Thyroid gland (tissue), 4 donors: ENCODE measurements at regions of chr6 and their contacts with region 1.

Region 1: GRCh38 chr6:30742316-30743098 is at the start of gene FLOT1:
- DNase-seq: peak; percentile 98
- H3K4me3 ChIP-seq: peak within 1 kb of the TSS; percentile 30 to 72 (median 56)
- H3K27ac ChIP-seq: peak within 1 kb of the TSS; percentile 83 to 95 (median 93)
- H3K4me1 ChIP-seq: peaks cover 13 to 27% of the 10 kb centered on the region in 2 donors
- H3K27me3 ChIP-seq: no peaks in the 10 kb centered on the region
- CTCF ChIP-seq: peak in 1 of 6 experiments; percentile 9
- POLR2A ChIP-seq: peak; percentile 22 to 80
- total RNA-seq, gene FLOT1: 134 to 160 (median 144) TPM

Region 2: DNA sequence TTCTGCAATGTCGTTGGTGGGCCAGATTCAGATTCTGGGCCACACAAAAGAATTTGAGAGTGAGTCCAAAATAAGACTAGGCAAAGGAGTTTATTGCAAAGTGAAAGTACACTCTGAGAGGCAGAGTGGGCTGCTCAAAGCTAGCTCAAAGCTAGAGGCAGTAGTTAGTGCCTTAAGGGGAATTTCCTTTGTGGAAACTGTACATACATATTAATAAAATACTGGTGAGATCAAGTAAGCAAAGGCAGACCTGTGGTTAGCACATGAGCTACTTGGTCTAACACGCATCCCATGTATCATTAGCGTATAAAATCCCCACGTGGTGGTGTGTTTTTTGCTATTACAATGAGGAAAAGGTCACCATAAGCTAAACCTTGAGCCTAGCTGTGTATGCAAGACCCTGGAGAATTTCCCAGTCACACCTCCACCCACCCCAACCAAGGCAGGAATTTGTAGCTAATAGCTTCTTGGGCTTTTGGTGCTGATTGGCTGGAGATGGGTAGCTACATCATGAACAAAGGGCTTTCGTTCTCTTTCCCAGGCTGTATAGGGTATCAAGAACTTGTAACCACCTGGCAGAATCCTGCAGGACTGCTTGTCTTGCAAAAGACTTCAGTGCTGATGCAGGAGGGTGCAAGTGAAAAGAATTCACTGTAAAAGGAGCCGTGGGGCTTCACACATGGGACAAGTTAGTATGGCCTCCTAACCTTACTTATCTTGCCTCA is 514.6 kb before region 1 on chr6:
- intact Hi-C with region 1: no loop called
- DNase-seq: no peak
- H3K4me3 ChIP-seq: no peak overlapping the region
- H3K27ac ChIP-seq: no peak overlapping the region
- H3K4me1 ChIP-seq: no peaks in the 10 kb centered on the region
- H3K27me3 ChIP-seq: no peaks in the 10 kb centered on the region
- CTCF ChIP-seq: no peak
- POLR2A ChIP-seq: no peak

Region 3: DNA sequence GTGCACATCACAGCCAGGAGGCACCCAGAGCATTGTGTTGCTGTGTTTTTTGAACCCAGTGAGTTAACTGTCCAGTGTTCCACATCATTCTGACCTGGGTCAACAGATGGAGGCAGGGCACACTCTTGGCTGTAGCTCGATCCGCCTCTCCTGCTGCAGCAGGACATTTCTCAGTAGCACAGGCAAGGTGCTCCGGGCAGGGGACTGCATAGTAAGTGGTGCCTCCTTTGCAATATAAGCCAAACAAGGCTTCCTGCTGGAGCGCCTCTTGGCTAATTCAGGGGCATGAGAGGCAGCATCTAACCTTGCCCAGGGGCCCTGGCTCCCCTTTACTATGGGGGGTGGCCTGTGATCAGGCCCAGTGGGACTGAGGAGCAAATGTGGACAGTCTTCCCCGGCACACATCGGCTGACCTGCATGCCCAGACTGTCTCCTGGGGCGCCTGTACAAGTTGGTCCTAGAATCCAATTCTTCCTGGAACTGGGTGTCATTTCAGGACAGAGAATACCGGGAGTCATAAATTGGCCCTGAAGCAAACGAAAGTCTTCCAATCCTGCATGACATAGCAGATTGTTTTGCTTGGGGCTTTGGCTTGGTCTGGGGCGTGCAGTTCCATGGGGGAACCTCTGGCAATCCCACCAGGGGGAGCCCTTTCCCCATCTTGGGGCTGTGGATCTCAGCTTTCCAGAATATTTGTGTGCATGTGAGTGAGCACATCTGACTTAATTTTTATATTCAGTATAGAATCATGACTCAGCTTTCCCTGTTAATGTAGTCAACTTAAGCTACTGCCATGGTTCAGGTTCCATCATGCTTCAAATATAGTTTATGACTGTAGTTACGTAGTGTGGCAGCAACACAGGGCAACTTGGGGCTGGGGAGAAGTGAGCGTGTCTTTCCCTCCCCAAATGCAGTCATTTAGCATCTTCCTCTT is 85.8 kb after region 1 on chr6:
- intact Hi-C with region 1: loop called (anchors 10 kb)
- DNase-seq: peak; percentile 90 to 95
- H3K4me3 ChIP-seq: no peak overlapping the region
- H3K27ac ChIP-seq: peak overlapping the region; percentile 85 to 92 (median 90)
- H3K4me1 ChIP-seq: peaks cover 40 to 42% of the 10 kb centered on the region in 2 donors
- H3K27me3 ChIP-seq: no peaks in the 10 kb centered on the region
- CTCF ChIP-seq: peak; percentile 76 to 98 (median 94)
- POLR2A ChIP-seq: no peak

Region 4: DNA sequence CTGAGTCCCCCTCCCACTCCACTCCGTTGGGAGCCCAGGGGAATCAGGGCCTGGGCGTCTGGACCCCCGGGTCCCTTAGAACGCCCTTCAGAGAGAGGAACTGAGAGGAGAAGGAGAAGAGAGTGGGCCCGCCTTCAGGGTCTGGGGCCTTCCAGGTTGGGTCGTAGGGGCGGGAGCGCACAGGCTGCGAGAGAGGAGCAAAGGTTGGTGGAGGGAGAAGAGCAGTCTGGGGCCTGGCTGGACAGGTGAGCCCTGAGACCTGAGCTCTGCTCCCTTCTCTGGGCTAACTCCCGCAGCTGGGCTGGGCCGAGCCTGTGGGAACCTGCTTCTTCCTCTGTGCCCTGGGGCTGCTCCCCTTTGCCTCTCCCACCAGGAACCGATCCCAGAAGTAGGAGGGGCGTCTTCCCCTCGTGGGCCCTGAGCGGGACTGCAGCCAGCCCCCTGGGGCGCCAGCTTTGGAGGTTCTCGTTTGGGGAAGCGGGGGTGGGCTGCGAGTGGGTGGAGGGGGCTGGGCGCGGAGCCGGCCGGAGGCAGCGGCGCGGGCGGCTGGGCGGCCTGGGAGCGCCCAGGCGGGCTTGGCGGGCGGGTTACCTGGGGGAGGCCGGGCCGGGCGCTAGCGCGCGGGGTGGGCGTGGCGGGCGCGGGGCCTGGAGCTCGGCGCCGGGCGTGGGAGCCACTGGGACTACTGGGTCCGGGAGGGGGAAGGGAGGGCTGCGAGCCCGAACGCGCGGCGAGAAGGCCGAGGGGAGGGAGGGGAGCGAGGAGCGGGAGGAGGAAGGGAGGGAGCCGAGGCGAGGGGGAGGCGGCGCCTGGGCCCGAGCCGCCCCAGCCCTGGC is 141.4 kb after region 1 on chr6 and contains the start of gene DDR1:
- intact Hi-C with region 1: loop called (anchors 10 kb)
- DNase-seq: peak; percentile 83 to 87
- H3K4me3 ChIP-seq: peak within 1 kb of the TSS; percentile 1 to 78 (median 57)
- H3K27ac ChIP-seq: peak within 1 kb of the TSS; percentile 91 to 98 (median 96)
- H3K4me1 ChIP-seq: peaks cover 34 to 56% of the 10 kb centered on the region in 2 donors
- H3K27me3 ChIP-seq: no peaks in the 10 kb centered on the region
- CTCF ChIP-seq: no peak
- POLR2A ChIP-seq: peak in 1 of 2 donors; percentile 42
- total RNA-seq, gene DDR1: 93.4 to 207 (median 131) TPM

Region 5: DNA sequence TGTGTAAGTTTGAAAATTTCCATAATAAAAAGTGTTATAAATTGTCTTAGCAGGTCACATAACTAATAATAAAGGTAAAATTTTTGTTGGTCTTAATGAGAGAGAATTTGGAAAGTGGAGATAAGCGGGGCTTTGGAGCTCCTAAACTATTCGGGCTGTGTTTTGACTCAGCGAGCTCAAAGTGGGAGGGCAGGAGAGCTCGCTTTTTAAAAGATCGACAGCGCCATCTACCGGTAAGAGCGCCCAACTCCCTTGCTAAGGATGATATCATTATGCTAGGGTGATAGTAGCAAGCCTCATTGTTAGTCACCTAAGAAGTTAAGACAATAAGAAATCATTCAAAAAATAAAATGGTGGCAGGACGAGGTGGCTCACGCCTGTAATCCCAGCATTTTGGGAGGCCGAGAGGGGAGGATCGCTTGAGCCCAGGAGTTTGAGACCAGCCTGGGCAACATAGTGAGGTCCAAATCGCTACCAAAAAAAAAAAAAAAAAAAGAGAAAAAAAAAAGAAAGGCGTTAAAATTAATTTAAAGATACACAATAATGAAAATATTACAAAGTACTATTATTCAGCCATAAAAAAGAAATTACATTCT is 345.1 kb after region 1 on chr6:
- intact Hi-C with region 1: loop called (anchors 10 kb)
- DNase-seq: peak; percentile 85 to 88
- H3K4me3 ChIP-seq: no peak overlapping the region
- H3K27ac ChIP-seq: no peak overlapping the region
- H3K4me1 ChIP-seq: peaks cover 0 to 4% of the 10 kb centered on the region in 2 donors
- H3K27me3 ChIP-seq: no peaks in the 10 kb centered on the region
- CTCF ChIP-seq: peak in 5 of 6 experiments; percentile 70 to 85 (median 78)
- POLR2A ChIP-seq: no peak